ENCODE measurements at regions of chr6 and their contacts with region 1.

Region 1: GRCh38 chr6:134063966-134064445 is 11.6 kb upstream of the SLC2A12 start:
- H3K4me3 ChIP-seq: no peak overlapping the region
- H3K27ac ChIP-seq: no peak overlapping the region
- H3K4me1 ChIP-seq: no peaks in the 10 kb centered on the region
- CTCF ChIP-seq: peak; percentile 91

Region 2: DNA sequence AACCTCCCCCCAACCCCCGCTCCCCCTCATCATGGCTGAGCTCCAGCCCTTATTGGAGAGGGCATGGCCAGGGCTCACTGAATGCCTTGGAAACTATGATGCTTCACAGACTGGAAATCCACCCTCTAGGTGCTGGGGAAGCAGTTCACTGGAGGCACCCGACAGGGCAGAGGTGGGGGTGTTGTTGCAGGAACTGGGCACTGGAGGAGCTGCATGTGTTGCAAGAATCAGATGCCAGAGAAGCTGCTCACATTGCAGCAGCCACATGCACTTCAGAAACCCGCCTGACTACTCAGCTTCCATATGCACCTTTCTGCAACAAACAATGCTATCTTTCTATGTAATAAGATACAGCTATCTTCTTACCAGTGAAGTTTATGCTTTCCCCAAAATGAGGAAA is 118.8 kb before region 1 on chr6:
- CTCF ChIA-PET with region 1: interaction called, 12 read pairs
- POLR2A ChIA-PET with region 1: no interaction called
- H3K4me3 ChIP-seq: no peak overlapping the region
- H3K27ac ChIP-seq: no peak overlapping the region
- H3K4me1 ChIP-seq: no peaks in the 10 kb centered on the region
- CTCF ChIP-seq: 0 out of 2 replicates have a peak, but pooled peaks have one; percentile 31

Region 3: DNA sequence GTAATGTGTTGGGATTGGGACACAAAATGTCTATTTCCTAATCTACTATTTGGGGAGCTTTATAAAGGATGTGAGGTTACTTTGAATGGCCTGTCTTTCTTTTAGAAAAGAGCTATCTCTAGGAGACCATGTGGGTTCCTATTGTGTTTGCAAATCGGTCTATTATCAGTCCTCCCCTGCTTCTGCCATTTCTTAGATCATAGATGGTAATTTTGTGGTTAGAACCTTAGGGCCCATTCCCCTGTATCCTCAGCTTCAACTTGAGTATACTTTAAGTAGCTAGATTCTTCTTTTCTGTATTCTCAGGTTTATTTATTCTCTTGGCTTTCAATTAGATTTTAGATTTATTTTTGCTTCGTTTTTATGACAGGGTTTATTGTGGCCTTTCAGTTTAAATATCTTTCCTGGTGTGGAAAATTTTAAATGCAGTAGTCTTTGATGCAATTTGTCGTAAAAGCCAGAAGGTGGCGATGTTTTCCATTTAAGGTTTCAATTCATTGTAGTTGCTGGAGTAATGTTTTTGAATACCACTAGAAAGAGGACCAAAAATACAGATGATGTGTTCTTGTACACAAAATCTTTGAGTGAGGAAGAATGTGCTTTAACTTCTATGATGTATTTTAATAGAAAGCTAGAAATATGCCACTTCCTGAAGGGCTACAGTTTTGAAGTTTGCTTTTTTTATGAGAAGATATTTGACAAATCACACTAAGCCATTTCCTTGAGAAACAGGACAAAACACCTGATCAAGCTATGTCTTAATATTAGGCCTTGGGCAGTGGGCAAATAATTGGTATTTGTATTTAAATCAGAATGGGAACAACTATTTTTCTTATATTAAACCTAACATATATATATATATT is 90.7 kb before region 1 on chr6:
- CTCF ChIA-PET with region 1: interaction called, 304 read pairs
- POLR2A ChIA-PET with region 1: no interaction called
- H3K4me3 ChIP-seq: no peak overlapping the region
- H3K27ac ChIP-seq: 0 out of 2 replicates have a peak overlapping the region, but pooled peaks have one; percentile 13
- H3K4me1 ChIP-seq: peaks cover 21% of the 10 kb centered on the region
- CTCF ChIP-seq: peak; percentile 47; the same call in 1 of the 2 replicates

Region 4: GRCh38 chr6:134021396-134022122 is 42.4 kb before region 1 on chr6:
- CTCF ChIA-PET with region 1: interaction called, 32 read pairs
- POLR2A ChIA-PET with region 1: no interaction called
- H3K4me3 ChIP-seq: no peak overlapping the region
- H3K27ac ChIP-seq: no peak overlapping the region
- H3K4me1 ChIP-seq: no peaks in the 10 kb centered on the region
- CTCF ChIP-seq: no peak

Region 5: GRCh38 chr6:134074151-134075055 is 10.4 kb after region 1 on chr6:
- CTCF ChIA-PET with region 1: interaction called, 44 read pairs
- POLR2A ChIA-PET with region 1: no interaction called
- H3K4me3 ChIP-seq: no peak overlapping the region
- H3K27ac ChIP-seq: no peak overlapping the region
- H3K4me1 ChIP-seq: peaks cover under 1% of the 10 kb centered on the region; the same call in 1 of the 2 replicates
- CTCF ChIP-seq: no peak

Region 6: DNA sequence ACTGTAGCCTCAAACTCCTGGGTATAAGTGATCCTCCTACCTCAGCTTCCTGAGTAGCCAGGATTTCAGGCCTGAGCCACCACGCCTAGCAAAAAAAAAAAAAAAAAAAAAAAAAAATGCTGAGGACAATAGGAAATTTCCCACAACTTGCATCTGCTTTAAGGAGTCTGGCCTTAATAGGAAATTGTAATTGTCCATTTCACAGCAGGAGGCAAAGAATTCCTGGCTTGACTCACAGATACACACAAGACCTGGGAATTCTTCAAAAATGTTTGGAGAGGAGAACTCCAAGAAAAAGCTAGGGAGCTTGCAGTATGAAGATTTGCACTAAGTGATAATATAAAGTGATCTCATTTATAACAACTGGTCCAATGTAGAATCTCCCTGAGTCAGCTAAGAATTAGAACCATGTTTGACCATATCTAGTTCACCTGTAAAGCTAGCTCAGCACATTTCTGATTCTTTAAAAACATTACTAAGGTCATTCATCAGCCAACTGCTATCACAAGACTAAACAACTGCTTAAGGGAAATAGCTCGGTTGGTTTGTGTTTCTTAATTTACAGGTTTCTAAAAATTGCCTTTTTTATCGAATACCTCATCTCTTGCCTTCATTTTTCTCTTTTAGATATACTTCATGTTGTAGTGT is 68.6 kb after region 1 on chr6:
- CTCF ChIA-PET with region 1: no interaction called
- POLR2A ChIA-PET with region 1: no interaction called
- H3K4me3 ChIP-seq: no peak overlapping the region
- H3K27ac ChIP-seq: no peak overlapping the region
- H3K4me1 ChIP-seq: no peaks in the 10 kb centered on the region
- CTCF ChIP-seq: no peak